ENCODE measurements at regions of chr2 and their contacts with region 1.

Region 1: DNA sequence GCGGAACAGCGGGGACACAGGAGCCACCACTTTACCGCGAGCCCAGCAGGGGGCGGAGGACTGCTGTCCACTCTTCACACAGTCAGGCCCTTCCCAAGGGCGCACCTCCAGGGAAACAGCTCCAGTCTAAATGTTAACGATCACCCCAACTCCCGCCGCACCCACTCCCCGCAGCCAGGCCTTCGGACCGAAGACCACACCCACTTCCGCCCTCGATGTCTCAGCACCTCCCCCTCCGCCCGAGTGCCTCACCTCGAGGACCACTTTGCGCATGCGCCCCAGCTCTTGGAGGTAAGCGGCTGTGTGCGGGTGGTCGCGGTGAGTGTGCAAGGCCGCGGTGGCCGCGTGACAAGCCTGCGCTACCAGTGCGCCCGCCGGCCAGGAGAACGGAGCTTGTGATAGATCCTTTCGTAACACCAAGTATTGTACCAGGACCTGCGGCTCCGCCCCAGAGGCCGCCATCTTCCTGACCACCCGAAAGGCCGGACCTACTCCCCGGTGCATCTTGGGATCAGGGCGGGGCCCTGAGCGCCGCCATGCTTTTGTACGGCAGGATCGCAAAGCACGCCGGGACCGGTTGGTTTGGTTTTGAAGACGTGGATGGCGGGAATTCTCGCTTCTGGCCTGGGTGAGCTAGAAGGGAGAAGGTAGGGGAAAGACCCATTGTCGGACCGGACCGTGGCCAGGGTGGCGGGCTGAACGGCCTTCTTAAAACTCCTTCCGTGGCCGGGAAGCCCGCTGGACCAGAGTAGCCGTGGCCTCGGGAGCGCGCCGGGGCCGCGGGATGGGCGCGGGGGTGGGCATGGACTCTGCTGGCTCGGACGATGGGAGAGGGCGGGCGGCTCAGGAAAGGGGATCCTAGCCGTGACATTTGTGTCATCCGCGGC is at the starts of genes CENPO and PTRHD1:
- DNase-seq: peak; percentile 98
- H3K4me3 ChIP-seq: peak within 1 kb of the TSS; percentile 57 to 82 (median 61)
- H3K27ac ChIP-seq: peak within 1 kb of the TSS; percentile 81
- H3K4me1 ChIP-seq: peaks cover 20% of the 10 kb centered on the region
- H3K27me3 ChIP-seq: no peaks in the 10 kb centered on the region
- CTCF ChIP-seq: peak; percentile 67 to 82
- POLR2A ChIP-seq: no peak
- total RNA-seq, gene CENPO: 42.2 and 45.3 TPM in 2 replicates
- total RNA-seq, gene PTRHD1: 35.6 and 41.1 TPM in 2 replicates

Region 2: DNA sequence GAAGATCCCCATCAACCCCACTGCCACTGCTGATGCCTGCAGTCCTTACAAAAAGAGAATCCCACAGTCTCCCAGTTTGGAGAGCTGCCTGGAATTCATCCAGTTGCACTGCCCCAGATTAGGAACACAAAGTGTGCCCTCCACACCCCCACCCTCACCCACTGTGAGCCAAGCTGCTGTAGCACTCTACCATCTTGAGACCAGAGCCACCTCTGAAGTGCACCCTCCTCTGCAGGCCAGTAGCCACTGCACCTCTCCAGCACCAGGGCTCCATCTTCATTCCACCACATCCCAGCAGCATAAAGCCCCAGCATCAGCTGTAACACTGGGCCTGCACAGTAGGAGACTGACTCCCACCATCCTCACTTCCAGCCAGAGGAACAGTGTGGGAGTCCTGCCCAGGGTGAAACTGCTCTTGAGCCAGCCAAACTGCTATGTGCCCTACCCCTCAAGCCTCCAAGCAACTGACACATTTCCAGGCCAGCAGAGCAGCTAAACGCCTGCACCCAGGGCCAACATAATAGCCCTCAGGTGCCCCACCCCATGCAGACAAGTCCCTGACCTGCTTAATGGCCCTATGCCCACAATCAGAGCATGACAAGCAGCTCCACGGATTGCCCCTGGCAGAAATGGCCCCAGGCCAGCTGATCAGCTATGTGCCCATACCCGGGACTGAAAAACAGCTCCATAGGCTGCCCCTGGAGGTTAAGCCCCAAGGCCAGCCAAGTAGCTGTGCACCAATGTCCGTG is 1072.2 kb before region 1 on chr2:
- CTCF ChIA-PET with region 1: no interaction called
- POLR2A ChIA-PET with region 1: no interaction called
- dilution Hi-C with region 1: no loop called
- intact Hi-C with region 1: no loop called
- DNase-seq: no peak
- H3K4me3 ChIP-seq: no peak overlapping the region
- H3K27ac ChIP-seq: no peak overlapping the region
- H3K4me1 ChIP-seq: no peaks in the 10 kb centered on the region
- H3K27me3 ChIP-seq: no peaks in the 10 kb centered on the region
- CTCF ChIP-seq: no peak
- POLR2A ChIP-seq: no peak

Region 3: GRCh38 chr2:24490674-24491625 is 302.2 kb before region 1 on chr2 and contains the start of gene NCOA1:
- CTCF ChIA-PET with region 1: interaction called, 3 read pairs
- POLR2A ChIA-PET with region 1: no interaction called
- dilution Hi-C with region 1: no loop called
- intact Hi-C with region 1: loop called (anchors 2 kb)
- DNase-seq: peak; percentile 84
- H3K4me3 ChIP-seq: peak within 1 kb of the TSS; percentile 62 to 78 (median 76)
- H3K27ac ChIP-seq: peak within 1 kb of the TSS; percentile 26
- H3K4me1 ChIP-seq: peaks cover 29% of the 10 kb centered on the region
- H3K27me3 ChIP-seq: peaks cover 0 to 3% of the 10 kb centered on the region in 2 experiments
- CTCF ChIP-seq: peak in 1 of 2 donors; percentile 29
- POLR2A ChIP-seq: no peak
- total RNA-seq, gene NCOA1: 10.9 and 14.1 TPM in 2 replicates

Region 4: DNA sequence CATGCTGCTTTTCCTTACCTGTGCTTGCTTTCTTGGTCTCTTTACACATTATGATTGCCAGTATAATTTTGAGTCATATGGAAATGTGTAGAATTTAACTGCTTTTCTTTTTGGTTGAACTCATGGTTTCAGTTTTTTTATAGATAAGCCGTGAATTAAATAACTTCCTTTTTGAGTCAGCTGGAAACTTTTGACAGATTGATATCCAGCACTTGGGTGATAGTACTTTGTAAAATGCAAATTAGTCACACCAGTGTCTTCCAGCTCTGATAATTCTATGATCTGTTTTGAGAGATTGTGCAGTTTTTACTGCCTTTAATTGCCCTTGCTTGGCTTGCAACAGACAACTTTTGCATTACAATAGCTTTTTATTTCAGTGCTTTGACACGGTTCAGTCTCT is 215.6 kb before region 1 on chr2:
- CTCF ChIA-PET with region 1: no interaction called
- POLR2A ChIA-PET with region 1: no interaction called
- dilution Hi-C with region 1: no loop called
- intact Hi-C with region 1: no loop called
- DNase-seq: peak; percentile 55
- H3K4me3 ChIP-seq: no peak overlapping the region
- H3K27ac ChIP-seq: no peak overlapping the region
- H3K4me1 ChIP-seq: peaks cover 9% of the 10 kb centered on the region
- H3K27me3 ChIP-seq: no peaks in the 10 kb centered on the region
- CTCF ChIP-seq: no peak
- POLR2A ChIP-seq: no peak

Region 5: DNA sequence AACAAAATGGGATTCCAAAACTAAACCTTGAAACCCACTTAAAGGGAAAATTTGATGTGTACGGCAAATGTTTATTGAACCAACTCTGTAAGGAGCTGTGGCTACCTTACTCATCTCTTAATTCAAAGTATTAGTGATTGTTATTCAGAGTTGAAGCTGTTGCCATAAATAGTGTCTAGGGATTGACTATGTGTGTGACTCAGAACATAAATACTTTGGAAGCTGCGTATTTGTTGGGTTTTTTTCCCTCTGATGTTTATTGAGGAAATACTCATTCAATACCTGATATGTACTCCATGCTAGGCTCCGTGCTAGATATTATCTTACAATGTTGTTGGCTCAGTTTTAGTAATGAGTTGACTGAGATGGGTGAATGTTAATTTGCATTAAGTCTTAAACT is 90.3 kb before region 1 on chr2:
- CTCF ChIA-PET with region 1: no interaction called
- POLR2A ChIA-PET with region 1: no interaction called
- dilution Hi-C with region 1: no loop called
- intact Hi-C with region 1: loop called (anchors 5 kb)
- DNase-seq: peak; percentile 88
- H3K4me3 ChIP-seq: no peak overlapping the region
- H3K27ac ChIP-seq: peak overlapping the region; percentile 70
- H3K4me1 ChIP-seq: peaks cover 13% of the 10 kb centered on the region
- H3K27me3 ChIP-seq: no peaks in the 10 kb centered on the region
- CTCF ChIP-seq: no peak
- POLR2A ChIP-seq: no peak

Region 6: DNA sequence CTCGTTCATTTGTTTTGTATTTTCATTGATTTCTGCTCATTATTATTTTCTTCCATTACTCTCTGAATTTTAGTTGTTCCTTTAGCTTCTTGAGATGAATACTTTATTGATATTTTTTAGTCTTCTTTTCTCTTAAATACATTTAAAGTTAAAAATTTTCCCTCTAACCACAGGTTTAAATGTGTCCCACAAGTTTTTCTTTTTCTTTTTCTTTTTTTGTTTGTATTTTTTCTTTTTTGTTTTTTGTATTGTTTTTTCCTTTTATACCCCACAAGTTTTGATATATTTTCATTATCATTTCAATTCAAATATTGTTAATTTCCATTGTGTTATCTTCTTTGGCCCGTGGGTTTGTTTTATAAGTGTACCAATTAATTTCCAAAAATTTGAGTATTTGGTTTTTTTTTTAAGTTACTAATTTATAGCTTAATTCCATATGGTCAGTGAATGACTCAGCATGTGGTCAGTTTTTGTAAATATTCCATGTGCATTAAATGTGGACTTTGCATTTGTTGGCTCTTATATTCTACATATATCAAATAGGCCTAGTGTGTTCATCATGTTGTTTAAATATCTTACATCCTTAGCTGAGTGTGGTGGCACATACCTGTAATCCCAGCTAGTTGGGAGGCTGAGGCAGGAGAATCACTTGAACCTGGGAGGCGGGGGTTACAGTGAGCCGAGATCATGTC is 16.3 kb after region 1 on chr2:
- CTCF ChIA-PET with region 1: interaction called, 17 read pairs
- POLR2A ChIA-PET with region 1: no interaction called
- dilution Hi-C with region 1: no loop called
- intact Hi-C with region 1: loop called (anchors 2 kb)
- DNase-seq: no peak
- H3K4me3 ChIP-seq: no peak overlapping the region
- H3K27ac ChIP-seq: no peak overlapping the region
- H3K4me1 ChIP-seq: peaks cover 6% of the 10 kb centered on the region
- H3K27me3 ChIP-seq: no peaks in the 10 kb centered on the region
- CTCF ChIP-seq: no peak
- POLR2A ChIP-seq: no peak